ENCODE measurements at regions of chr19 and their contacts with region 1.

Region 1: DNA sequence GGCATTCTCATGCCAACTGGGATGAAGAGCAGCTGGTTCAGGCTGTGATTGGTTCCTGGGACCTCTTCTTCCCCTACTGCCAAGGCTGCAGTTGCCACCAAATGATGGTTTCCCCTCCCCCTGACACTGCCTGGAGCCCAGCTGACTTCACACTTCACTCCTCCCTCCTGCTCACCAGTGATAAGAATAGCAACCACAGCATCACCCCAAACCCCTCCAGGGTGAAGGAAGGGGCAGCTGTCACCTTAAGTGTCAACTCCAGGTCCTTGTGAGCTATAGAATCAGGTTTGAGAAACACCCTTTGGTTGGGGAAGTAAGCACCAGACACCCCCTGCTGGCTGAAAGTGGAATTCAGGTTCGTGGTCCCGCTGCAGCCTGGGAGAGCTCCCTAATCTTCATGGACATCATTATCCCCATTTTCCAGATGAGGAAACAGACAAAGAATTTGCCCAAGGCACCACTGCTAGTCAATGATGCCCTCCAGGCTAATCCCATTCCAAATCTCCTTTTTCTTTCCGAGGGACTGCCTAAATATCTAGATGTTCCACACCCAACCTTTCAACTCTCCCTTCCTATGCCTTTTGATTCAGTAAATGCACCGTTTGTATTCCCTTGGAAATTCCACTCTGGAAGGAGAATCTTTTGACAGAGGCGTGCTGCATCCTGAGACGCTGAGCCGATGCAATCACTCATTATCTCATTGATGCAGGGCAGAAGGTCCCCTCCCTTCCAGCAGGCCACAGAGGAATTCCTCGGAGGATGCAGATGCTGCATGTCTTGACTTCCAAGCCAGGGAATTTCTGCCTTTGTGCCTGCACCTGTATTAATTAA is 50.6 kb upstream of the UQCRFS1 start:
- DNase-seq: peak in 8 of 9 experiments; percentile 35 to 85 (median 58)
- ATAC-seq: peak; percentile 34
- H3K4me3 ChIP-seq: no peak overlapping the region
- H3K4me3 Mint-ChIP-seq: no peak overlapping the region
- H3K27ac ChIP-seq: peak overlapping the region in 1 of 2 experiments; percentile 37
- H3K27ac Mint-ChIP-seq: no peak overlapping the region
- H3K4me1 ChIP-seq: no peaks in the 10 kb centered on the region
- H3K4me1 Mint-ChIP-seq: no peaks in the 10 kb centered on the region
- H3K27me3 ChIP-seq: peaks cover 0 to 3% of the 10 kb centered on the region in 2 experiments
- H3K27me3 Mint-ChIP-seq: peaks cover 31% of the 10 kb centered on the region
- CTCF ChIP-seq: peak; percentile 84

Region 2: DNA sequence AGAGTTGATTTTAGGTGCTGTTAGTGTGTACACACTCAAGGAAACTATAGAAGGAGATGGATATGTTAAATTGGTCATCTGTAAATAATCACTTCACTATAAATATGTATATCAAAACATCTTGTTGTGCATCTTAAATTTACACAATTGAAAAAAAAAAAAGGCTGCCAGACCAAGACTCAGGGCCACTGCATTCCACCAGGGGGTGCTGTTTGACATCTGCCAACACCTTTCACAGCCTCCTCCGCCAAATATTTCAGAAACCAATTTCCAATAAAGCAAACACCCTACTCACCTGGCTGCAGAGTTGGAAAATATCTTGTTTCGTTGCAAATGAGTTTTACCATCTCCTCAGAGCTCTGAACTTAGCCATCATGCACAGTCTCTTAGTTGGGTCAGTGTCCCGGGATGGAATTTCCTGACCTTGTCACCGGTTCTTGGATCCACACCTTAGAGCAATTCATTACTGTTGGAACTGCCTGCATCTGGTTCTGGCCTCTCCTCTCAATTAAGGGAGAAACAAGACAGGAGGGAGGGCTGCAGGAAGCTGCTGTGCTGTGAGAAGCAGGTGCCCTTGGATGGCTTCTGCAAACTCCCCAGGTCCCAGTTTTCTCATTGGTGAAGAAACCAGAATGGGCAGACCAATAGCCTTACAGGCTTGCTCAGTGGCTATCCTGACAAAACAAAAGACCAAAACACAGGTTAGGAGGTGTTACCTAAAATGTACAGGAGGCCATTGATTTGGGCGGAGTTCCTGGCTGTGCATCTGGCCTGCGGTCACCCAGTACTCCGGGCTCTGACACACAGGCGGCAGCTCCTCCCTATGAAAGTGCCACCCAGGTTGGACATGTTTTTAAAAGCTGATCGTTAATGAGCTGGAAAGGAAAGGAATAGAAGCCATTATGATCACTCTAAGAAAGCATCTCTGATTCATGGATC is 797.1 kb before region 1 on chr19:
- CTCF ChIA-PET with region 1: no interaction called
- POLR2A ChIA-PET with region 1: no interaction called
- intact Hi-C with region 1: loop called in 1 of 2 experiments (anchors 5 kb)
- DNase-seq: peak; percentile 16 to 79 (median 70)
- ATAC-seq: peak; percentile 36
- H3K4me3 ChIP-seq: no peak overlapping the region
- H3K4me3 Mint-ChIP-seq: no peak overlapping the region
- H3K27ac ChIP-seq: no peak overlapping the region
- H3K27ac Mint-ChIP-seq: no peak overlapping the region
- H3K4me1 ChIP-seq: peaks cover 15% of the 10 kb centered on the region
- H3K4me1 Mint-ChIP-seq: peaks cover 38% of the 10 kb centered on the region
- H3K27me3 ChIP-seq: no peaks in the 10 kb centered on the region
- H3K27me3 Mint-ChIP-seq: peaks cover 2% of the 10 kb centered on the region
- CTCF ChIP-seq: peak; percentile 71

Region 3: DNA sequence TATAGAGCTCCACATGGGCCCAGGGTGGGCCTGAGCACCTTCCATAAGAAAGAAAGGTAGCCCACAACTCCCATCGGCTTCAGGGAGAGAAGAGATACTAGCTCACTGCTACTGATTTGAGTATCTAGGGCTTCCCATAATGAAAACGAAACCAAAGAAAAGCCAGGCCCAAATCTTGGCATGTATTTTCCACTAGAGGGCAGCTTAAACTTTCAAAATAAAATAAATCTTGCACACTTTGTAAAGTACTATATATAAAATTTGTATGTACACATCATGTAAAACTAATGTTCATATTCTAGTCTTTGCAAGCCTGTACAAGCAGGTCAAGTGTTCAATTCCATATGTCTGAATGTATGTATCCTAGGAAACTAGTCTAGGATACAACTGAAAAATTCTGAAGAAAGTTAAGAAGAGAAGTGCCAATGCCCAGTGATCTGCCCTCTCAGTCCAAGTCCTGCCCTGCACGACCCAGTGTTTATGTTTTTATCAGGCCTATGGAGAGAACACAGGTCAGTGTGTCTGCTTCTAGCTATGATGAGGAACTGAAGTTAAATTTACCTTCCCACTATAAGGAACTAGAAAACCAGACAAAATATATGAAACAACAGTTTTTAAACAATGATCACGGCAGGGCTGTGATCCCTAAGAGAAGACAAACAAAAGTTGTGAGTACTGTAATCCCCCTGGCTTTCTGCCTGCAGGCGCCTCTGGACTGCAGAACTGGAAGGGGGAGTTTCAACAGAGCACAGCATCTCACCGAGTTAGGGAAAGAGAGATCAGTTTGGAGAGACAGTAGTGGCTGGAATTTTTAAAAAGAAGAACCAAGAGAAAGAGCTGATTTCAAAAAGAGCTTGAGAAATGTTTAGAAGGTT is 526.3 kb before region 1 on chr19:
- CTCF ChIA-PET with region 1: interaction called, 10 read pairs
- POLR2A ChIA-PET with region 1: no interaction called
- intact Hi-C with region 1: loop called (anchors 1 to 2 kb)
- DNase-seq: peak in 2 of 9 experiments; percentile 38 to 51
- ATAC-seq: no peak
- H3K4me3 ChIP-seq: no peak overlapping the region
- H3K4me3 Mint-ChIP-seq: no peak overlapping the region
- H3K27ac ChIP-seq: peak overlapping the region in 1 of 2 experiments; percentile 60
- H3K27ac Mint-ChIP-seq: no peak overlapping the region
- H3K4me1 ChIP-seq: no peaks in the 10 kb centered on the region
- H3K4me1 Mint-ChIP-seq: peaks cover 4% of the 10 kb centered on the region
- H3K27me3 ChIP-seq: no peaks in the 10 kb centered on the region
- H3K27me3 Mint-ChIP-seq: peaks cover 3% of the 10 kb centered on the region
- CTCF ChIP-seq: peak; percentile 36

Region 4: GRCh38 chr19:29117926-29118325 is 145.6 kb before region 1 on chr19:
- CTCF ChIA-PET with region 1: no interaction called
- POLR2A ChIA-PET with region 1: no interaction called
- intact Hi-C with region 1: no loop called
- DNase-seq: no peak
- ATAC-seq: no peak
- H3K4me3 ChIP-seq: no peak overlapping the region
- H3K4me3 Mint-ChIP-seq: no peak overlapping the region
- H3K27ac ChIP-seq: no peak overlapping the region
- H3K27ac Mint-ChIP-seq: no peak overlapping the region
- H3K4me1 ChIP-seq: no peaks in the 10 kb centered on the region
- H3K4me1 Mint-ChIP-seq: no peaks in the 10 kb centered on the region
- H3K27me3 ChIP-seq: no peaks in the 10 kb centered on the region
- H3K27me3 Mint-ChIP-seq: no peaks in the 10 kb centered on the region
- CTCF ChIP-seq: no peak

Region 5: GRCh38 chr19:29277102-29277501 is 13.6 kb after region 1 on chr19:
- CTCF ChIA-PET with region 1: interaction called, 26 read pairs
- POLR2A ChIA-PET with region 1: no interaction called
- intact Hi-C with region 1: no loop called
- DNase-seq: peak; percentile 25 to 89 (median 52)
- ATAC-seq: peak; percentile 91
- H3K4me3 ChIP-seq: peak overlapping the region in 1 of 2 experiments; percentile 18
- H3K4me3 Mint-ChIP-seq: peak overlapping the region; percentile 46
- H3K27ac ChIP-seq: peak overlapping the region; percentile 9 to 30
- H3K27ac Mint-ChIP-seq: peak overlapping the region; percentile 32
- H3K4me1 ChIP-seq: peaks cover 6% of the 10 kb centered on the region
- H3K4me1 Mint-ChIP-seq: peaks cover 10% of the 10 kb centered on the region
- H3K27me3 ChIP-seq: no peaks in the 10 kb centered on the region
- H3K27me3 Mint-ChIP-seq: peaks cover 14% of the 10 kb centered on the region
- CTCF ChIP-seq: no peak

Measured in CD8-positive, alpha-beta T cell (primary cell).